ENCODE measurements at regions of chr5 and their contacts with region 1.

Region 1: DNA sequence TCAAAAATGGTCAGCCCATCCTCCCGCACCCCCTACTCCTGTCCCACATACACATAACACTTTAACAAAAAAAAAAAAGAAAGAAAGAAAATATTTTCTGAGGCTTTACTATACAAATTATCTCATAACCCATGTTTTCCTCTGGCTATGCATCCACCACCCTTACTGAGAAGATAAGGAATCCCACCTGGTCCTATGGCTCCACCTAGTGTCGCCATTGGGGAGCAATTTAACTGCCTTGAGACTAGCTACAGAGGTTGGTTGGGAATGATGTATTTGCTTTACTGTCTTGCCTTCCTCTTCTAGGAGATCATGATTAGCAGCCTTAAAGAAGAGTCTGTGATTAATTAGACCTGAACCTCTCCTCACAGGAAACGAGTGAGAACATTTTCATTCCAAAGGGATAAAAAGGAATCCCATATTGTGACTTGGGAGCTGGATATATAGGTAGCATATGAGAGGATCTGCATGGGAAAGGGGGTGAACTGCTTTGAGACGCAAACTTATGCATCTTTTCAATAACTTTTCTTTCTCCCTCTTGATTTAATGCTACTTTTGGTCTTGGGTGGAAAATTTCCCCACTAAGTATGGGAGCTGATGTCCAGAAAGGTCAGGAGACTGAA is 77.7 kb upstream of the SELENOP start:
- DNase-seq: peak; percentile 77
- H3K4me3 Mint-ChIP-seq: no peak overlapping the region
- H3K27ac Mint-ChIP-seq: no peak overlapping the region
- H3K4me1 Mint-ChIP-seq: no peaks in the 10 kb centered on the region
- H3K27me3 Mint-ChIP-seq: peaks cover 2% of the 10 kb centered on the region

Region 2: GRCh38 chr5:41863871-41864486 is 1025.4 kb before region 1 on chr5:
- CTCF ChIA-PET with region 1: interaction called, 3 read pairs
- POLR2A ChIA-PET with region 1: no interaction called
- intact Hi-C with region 1: loop called (anchors 5 kb)
- DNase-seq: no peak
- H3K4me3 Mint-ChIP-seq: peak overlapping the region; percentile 61
- H3K27ac Mint-ChIP-seq: peak overlapping the region; percentile 91
- H3K4me1 Mint-ChIP-seq: peaks cover 75% of the 10 kb centered on the region
- H3K27me3 Mint-ChIP-seq: no peaks in the 10 kb centered on the region

Region 3: DNA sequence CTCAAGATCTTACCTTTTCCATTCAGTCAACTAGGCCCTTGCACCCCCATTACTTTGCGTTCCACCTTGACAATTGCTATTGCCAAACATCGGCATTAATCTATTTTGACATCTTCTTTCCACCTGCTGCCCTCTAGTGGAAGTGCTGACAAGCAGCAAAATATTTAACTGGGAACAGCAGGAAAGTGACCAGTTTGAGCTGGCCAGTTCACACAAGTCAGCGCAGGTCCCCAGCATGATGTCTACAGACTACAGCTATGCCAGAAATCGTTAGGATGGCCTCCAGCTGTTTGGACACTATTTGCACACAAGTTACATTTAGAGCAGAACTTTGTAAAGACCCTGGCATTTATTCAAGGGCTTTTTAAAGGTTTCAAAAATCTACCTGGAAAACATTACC is 306.1 kb before region 1 on chr5:
- CTCF ChIA-PET with region 1: interaction called, 5 read pairs
- POLR2A ChIA-PET with region 1: no interaction called
- intact Hi-C with region 1: loop called (anchors 2 kb)
- DNase-seq: peak; percentile 31
- H3K4me3 Mint-ChIP-seq: no peak overlapping the region
- H3K27ac Mint-ChIP-seq: no peak overlapping the region
- H3K4me1 Mint-ChIP-seq: peaks cover 2% of the 10 kb centered on the region
- H3K27me3 Mint-ChIP-seq: peaks cover 13% of the 10 kb centered on the region

Region 4: GRCh38 chr5:42745426-42745825 is 144.0 kb before region 1 on chr5:
- CTCF ChIA-PET with region 1: no interaction called
- POLR2A ChIA-PET with region 1: no interaction called
- intact Hi-C with region 1: no loop called
- DNase-seq: peak; percentile 16
- H3K4me3 Mint-ChIP-seq: no peak overlapping the region
- H3K27ac Mint-ChIP-seq: no peak overlapping the region
- H3K4me1 Mint-ChIP-seq: peaks cover 7% of the 10 kb centered on the region
- H3K27me3 Mint-ChIP-seq: no peaks in the 10 kb centered on the region

Region 5: DNA sequence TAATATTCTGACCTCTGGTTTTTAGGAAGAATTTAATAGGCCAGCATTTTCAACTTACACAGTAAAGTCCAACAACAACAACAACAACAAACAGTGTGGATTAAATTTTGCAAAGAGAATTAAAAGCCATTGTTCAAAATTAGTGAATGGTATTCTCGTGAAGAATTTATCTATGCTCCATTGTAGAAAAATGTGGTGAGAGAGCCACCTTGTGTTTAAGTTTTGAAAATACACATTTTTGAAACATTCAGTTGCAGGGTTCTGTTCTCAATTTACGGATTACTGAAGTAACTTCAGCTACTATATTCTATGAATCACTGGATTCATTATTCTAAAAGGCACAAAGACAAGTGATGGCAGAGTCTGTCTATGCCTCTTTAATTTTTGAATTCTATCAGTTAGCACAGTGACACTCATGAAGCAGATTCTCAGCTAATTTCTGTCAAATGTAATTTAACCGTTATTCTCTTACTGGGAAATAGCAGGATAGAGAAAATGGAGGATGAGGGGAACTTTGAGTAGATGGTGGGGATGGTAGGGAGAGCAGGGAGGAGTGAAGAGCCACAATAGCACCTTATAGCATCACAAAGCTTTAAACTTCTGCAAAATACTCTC is 121.8 kb before region 1 on chr5:
- CTCF ChIA-PET with region 1: interaction called, 9 read pairs
- POLR2A ChIA-PET with region 1: no interaction called
- intact Hi-C with region 1: loop called (anchors 10 kb)
- DNase-seq: no peak
- H3K4me3 Mint-ChIP-seq: no peak overlapping the region
- H3K27ac Mint-ChIP-seq: no peak overlapping the region
- H3K4me1 Mint-ChIP-seq: no peaks in the 10 kb centered on the region
- H3K27me3 Mint-ChIP-seq: peaks cover 5% of the 10 kb centered on the region

Region 6: DNA sequence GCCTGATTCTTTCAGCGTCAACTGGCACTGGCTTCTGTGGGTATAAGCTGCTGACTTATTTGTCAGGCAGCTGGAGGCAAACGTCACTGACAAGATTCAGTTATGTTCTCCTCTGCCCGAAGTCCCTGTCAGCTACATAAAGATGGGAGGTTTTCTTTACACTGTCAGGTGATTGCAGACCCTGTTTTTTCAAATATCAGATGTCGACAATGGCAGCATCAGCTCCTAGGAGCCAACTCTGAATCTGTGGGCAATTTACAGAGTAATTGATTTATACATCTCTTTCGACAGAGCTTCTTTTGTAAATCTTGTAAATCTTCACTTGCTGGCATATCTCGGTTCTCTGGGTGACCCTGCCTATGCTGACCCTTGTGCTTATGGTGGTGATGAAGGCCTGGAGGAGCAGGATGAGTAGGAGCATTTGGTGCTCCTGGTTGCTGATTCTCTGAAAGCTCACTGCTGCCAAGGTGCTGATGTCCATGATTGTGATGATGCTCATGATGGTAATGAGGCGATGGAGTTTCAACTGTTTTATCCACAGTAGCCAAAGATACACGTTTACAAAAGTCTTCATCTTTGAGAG is 88.6 kb before region 1 on chr5:
- CTCF ChIA-PET with region 1: no interaction called
- POLR2A ChIA-PET with region 1: no interaction called
- intact Hi-C with region 1: no loop called
- DNase-seq: no peak
- H3K4me3 Mint-ChIP-seq: no peak overlapping the region
- H3K27ac Mint-ChIP-seq: no peak overlapping the region
- H3K4me1 Mint-ChIP-seq: no peaks in the 10 kb centered on the region
- H3K27me3 Mint-ChIP-seq: no peaks in the 10 kb centered on the region

Region 7: DNA sequence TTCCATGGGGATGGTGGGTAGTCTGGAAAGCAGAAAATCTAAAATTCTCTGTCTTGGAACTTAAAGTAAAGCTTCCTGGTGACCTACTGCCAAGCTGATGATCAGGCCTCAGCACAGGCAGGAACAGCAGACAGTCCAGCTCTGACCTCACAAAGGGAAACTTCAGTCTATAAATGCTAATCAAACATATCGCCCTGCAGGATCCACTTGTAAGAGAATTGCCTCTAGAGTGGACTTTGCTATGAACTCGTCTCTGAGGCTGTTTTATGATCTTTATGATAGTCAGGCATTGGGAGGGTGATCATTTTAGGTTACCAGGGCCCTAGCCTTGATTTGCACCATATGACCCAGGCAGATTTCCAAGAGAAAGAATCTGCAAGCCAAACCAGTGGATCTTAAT is 10.1 kb before region 1 on chr5:
- CTCF ChIA-PET with region 1: interaction called, 18 read pairs
- POLR2A ChIA-PET with region 1: no interaction called
- intact Hi-C with region 1: no loop called
- DNase-seq: no peak
- H3K4me3 Mint-ChIP-seq: no peak overlapping the region
- H3K27ac Mint-ChIP-seq: no peak overlapping the region
- H3K4me1 Mint-ChIP-seq: peaks cover 8% of the 10 kb centered on the region
- H3K27me3 Mint-ChIP-seq: no peaks in the 10 kb centered on the region

Measured in activated CD4-positive, alpha-beta memory T cell treated with anti-CD3 and anti-CD28 coated beads for 36 hours (primary cell).